PC-9 (cell line): ENCODE measurements at regions of chr13 and their contacts with region 1.

Region 1: GRCh38 chr13:26498656-26499591 is 58.6 kb upstream of the WASF3 start:
- DNase-seq: peak; percentile 33 to 46
- H3K4me3 ChIP-seq: no peak overlapping the region
- H3K27ac ChIP-seq: no peak overlapping the region
- H3K4me1 ChIP-seq: no peaks in the 10 kb centered on the region
- H3K27me3 ChIP-seq: no peaks in the 10 kb centered on the region; the same call in 1 of the 2 replicates
- CTCF ChIP-seq: no peak; the same call in 1 of the 2 replicates

Region 2: GRCh38 chr13:26236296-26236695 is 262.6 kb before region 1 on chr13:
- CTCF ChIA-PET with region 1: interaction called, 11 read pairs
- POLR2A ChIA-PET with region 1: no interaction called
- intact Hi-C with region 1: no loop called
- DNase-seq: no peak
- H3K4me3 ChIP-seq: no peak overlapping the region
- H3K27ac ChIP-seq: no peak overlapping the region
- H3K4me1 ChIP-seq: no peaks in the 10 kb centered on the region
- H3K27me3 ChIP-seq: peaks cover 13% of the 10 kb centered on the region; the same call in 1 of the 2 replicates
- CTCF ChIP-seq: no peak

Region 3: DNA sequence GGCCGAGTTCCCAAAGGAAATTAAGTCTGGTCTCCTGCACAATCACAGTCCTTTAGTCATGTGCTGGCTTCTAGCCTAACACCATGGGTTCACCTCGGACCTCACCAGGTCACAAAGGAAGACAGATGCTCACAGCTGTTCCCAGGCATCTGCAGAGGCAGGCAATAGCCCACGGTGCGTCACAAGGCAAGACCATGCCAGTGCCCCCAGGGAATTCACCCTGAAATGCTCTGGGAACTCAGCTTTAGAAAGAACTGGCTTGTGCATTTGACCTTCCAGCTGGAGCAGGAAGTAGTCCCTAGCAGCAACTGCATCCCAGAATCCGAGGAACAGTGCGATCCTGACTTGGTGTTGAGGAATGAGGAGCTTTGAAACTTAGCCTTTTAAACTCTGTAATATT is 38.3 kb before region 1 on chr13:
- CTCF ChIA-PET with region 1: no interaction called
- POLR2A ChIA-PET with region 1: no interaction called
- intact Hi-C with region 1: no loop called
- DNase-seq: no peak
- H3K4me3 ChIP-seq: no peak overlapping the region
- H3K27ac ChIP-seq: no peak overlapping the region
- H3K4me1 ChIP-seq: 0 out of 2 replicates have a peak, but pooled peaks cover 15% of the 10 kb centered on the region
- H3K27me3 ChIP-seq: no peaks in the 10 kb centered on the region
- CTCF ChIP-seq: no peak

Region 4: DNA sequence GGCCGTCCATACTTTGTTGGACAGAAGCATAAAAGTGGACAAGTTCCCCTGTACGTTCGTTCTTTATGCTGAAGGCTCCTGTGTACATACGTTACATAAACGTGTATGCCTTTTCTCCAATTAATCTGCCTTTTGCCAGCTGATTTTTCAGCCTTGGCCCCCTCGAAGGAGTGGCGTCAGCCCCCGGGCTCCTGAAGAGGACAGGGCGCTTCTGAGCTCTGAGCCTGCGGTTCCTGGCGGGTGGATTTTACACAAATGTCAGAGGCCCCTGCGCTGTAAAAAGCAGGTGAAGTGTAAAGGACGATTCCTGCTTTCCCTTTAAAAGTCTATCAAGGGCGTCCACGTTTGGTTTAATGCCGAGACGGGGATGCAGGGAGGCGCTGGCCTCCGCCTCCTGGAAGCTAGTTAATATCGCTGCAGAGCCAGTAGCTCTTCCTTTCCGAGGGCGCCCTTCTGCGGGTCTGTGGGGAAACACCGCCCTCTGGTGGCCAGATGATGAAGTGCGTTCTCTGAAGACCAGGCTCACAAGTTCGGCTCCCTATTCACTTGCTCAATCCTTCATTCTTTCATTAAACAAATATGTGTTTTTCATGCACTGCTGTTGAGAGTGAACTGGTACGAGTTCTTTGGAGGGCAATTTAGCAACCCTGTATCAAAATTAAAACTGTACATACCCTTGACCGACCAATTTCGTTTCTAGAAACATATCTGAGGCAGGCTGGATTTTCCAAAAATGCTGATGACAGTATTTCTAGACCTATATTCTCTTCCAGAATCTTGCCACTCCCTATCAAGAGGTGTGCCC is 199.7 kb after region 1 on chr13:
- CTCF ChIA-PET with region 1: no interaction called
- POLR2A ChIA-PET with region 1: no interaction called
- intact Hi-C with region 1: loop called (anchors 5 kb)
- DNase-seq: peak; percentile 65 to 66
- H3K4me3 ChIP-seq: no peak overlapping the region
- H3K27ac ChIP-seq: no peak overlapping the region
- H3K4me1 ChIP-seq: no peaks in the 10 kb centered on the region
- H3K27me3 ChIP-seq: peaks cover 16% of the 10 kb centered on the region
- CTCF ChIP-seq: peak; percentile 97